Heart left ventricle (tissue), 16 donors: ENCODE measurements at regions of chr12 and their contacts with region 1.

Region 1: DNA sequence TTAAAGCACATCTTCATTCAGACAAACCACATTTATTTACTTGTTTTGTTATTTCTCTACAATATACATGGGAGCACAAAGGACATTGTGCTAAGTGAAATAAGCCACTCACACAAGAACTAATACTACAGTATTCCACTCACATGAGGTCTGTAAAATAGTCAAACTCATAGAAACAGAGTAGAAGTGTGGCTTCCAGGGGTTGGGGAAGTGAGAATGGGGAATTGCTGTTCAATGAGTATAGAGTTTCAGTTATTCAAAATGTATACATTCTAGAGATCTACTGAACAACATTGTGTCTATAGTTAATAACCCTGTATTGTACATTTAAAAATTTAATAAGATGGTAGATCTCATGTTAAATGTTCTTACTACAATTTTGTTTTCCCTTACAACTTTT is 88.8 kb downstream of the ATXN7L3B start:
- DNase-seq: no peak
- ATAC-seq: no peak
- H3K4me3 ChIP-seq: no peak overlapping the region
- H3K27ac ChIP-seq: no peak overlapping the region
- H3K4me1 ChIP-seq: no peaks in the 10 kb centered on the region
- H3K27me3 ChIP-seq: no peaks in the 10 kb centered on the region
- CTCF ChIP-seq: no peak
- POLR2A ChIP-seq: no peak

Region 2: DNA sequence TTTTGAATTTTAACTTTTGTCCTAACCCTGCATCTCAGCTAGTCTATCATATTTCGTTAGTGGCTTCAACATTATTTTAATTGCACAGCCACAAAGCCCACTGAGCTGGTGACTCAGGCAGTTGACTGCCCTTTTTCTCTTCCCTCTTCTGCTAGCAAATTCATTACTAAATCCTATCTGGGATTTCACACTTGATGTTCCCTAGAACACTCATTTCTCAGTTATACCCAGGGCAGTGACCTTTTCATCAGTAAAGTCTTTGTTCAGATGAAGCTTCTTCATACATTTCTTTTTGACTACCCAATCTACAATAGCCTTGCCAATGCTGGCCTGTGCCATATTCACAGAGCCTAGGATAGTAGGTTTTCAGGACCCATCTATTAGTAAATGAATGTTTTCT is 18.3 kb after region 1 on chr12:
- intact Hi-C with region 1: loop called in 1 of 10 experiments (anchors 1 kb)
- DNase-seq: no peak
- ATAC-seq: no peak
- H3K4me3 ChIP-seq: no peak overlapping the region
- H3K27ac ChIP-seq: no peak overlapping the region
- H3K4me1 ChIP-seq: no peaks in the 10 kb centered on the region
- H3K27me3 ChIP-seq: no peaks in the 10 kb centered on the region
- CTCF ChIP-seq: no peak
- POLR2A ChIP-seq: no peak